Activated T-helper 1 cell treated with anti-CD3 and anti-CD28 coated beads, Interleukin-12 subunit alpha, Interleukin-12 subunit beta, Interleukin-2, Interleukin-4 antibody, amounts not matched to agents 30 ng/mL and 10 ng/mL and 1 ng/mL, durations not matched to agents 14 hours and 24 hours and 36 hours (primary cell): ENCODE measurements at regions of chr14 and their contacts with region 1.

Region 1: DNA sequence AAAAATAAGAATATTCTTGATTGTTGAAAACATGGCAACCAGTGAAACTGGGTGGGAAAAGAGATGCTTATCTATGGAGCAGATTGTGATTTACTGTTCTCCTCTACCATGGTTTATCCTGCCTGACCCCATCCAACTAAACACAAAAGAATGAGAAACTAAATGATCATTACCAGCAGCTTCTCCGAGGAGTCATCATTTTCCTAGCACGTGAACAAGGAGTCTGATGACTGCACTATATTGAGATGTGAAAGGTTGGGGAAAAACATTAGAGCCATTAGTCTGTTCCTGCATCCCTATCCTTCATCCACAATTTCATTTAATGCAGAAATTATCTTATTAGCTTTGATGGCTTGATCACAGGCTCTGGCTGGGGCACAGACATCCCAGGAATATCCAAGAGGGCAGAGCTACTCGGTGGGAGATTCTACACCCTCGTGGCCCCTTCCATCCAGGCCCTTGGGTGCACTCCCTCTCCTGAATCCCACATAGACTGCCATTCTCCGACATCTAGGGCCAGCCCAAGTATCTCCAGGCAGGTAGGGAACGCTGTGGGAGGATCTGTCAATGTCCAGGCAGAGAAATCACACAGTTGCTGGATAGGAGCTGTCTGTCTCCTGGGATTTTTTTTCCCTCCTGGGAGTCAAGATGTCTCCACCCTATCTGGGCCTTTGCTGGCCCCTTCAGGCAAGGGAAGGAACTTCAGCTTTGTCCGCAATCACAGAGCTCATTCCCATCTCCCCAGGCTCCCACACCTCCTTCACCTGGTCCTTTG is 43.3 kb upstream of the DHRS4 start:
- DNase-seq: no peak
- H3K4me3 Mint-ChIP-seq: no peak overlapping the region
- H3K27ac Mint-ChIP-seq: no peak overlapping the region
- H3K4me1 Mint-ChIP-seq: no peaks in the 10 kb centered on the region
- H3K27me3 Mint-ChIP-seq: peaks cover 9% of the 10 kb centered on the region

Region 2: DNA sequence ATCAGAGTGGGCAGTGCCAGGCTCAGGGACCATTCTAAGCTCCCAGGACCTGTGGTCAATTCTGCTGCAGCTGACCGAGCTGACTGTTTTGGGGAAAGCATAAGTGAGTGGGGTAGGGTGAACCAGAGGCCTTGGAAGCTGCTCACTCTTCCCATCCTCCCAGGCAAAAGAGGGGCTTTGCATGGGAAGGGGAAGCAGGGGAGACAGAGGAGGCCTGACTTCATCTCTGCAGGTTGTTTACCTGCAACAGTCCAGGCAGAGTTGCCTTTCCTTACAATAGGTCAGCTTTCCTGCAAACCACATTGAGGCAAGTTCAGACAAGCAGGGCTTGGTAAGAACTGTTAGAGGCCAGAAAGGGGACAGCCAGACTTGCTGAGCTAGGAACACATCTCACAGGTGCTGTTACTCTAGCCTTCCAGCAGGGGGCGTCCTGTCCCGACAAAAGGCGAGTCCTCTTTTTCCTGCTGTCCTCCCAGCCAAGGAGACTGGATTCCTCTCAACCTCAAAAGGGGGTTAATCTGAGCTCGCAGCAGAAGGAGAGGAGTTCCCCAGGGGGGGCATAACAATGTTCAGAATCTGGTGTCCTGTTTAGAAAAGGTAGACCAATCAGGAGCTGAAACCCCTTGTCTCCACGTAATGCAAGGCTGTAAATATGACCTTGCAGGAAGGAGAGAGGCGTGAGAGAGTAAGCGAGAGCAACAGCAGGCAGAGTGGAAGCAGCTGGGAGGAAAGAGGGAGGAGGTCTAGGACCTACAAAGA is 278.4 kb before region 1 on chr14:
- intact Hi-C with region 1: loop called (anchors 1 kb)
- DNase-seq: peak; percentile 53
- H3K4me3 Mint-ChIP-seq: peak overlapping the region; percentile 16
- H3K27ac Mint-ChIP-seq: no peak overlapping the region
- H3K4me1 Mint-ChIP-seq: peaks cover 16% of the 10 kb centered on the region
- H3K27me3 Mint-ChIP-seq: peaks cover 2% of the 10 kb centered on the region

Region 3: GRCh38 chr14:23727566-23728335 is 182.5 kb before region 1 on chr14:
- intact Hi-C with region 1: loop called (anchors 1 kb)
- DNase-seq: no peak
- H3K4me3 Mint-ChIP-seq: no peak overlapping the region
- H3K27ac Mint-ChIP-seq: no peak overlapping the region
- H3K4me1 Mint-ChIP-seq: no peaks in the 10 kb centered on the region
- H3K27me3 Mint-ChIP-seq: peaks cover 2% of the 10 kb centered on the region

Region 4: GRCh38 chr14:24431569-24432258 is 521.4 kb after region 1 on chr14:
- intact Hi-C with region 1: no loop called
- DNase-seq: peak; percentile 85
- H3K4me3 Mint-ChIP-seq: peak overlapping the region; percentile 90
- H3K27ac Mint-ChIP-seq: peak overlapping the region; percentile 95
- H3K4me1 Mint-ChIP-seq: peaks cover 51% of the 10 kb centered on the region
- H3K27me3 Mint-ChIP-seq: no peaks in the 10 kb centered on the region